Activated T-helper 2 cell treated with anti-CD3 and anti-CD28 coated beads, Interferon-gamma antibody, Interleukin-2, Interleukin-4, amounts not matched to agents 10 μg/mL and 5 μg/mL and 100 μg/mL, durations not matched to agents 14 hours and 24 hours and 36 hours (primary cell): ENCODE measurements at regions of chr1 and their contacts with region 1.

Region 1: GRCh38 chr1:6205849-6206519 is at the start of gene RNF207:
- DNase-seq: peak; percentile 66
- H3K4me3 Mint-ChIP-seq: peak within 1 kb of the TSS; percentile 79
- H3K27ac Mint-ChIP-seq: peak within 1 kb of the TSS; percentile 46
- H3K4me1 Mint-ChIP-seq: peaks cover 11% of the 10 kb centered on the region
- H3K27me3 Mint-ChIP-seq: no peaks in the 10 kb centered on the region
- total RNA-seq, gene RNF207: 54.4 and 58.4 TPM in 2 replicates

Region 2: GRCh38 chr1:6026095-6026809 is 179.7 kb before region 1 on chr1:
- intact Hi-C with region 1: loop called (anchors 5 kb)
- DNase-seq: peak; percentile 91
- H3K4me3 Mint-ChIP-seq: peak overlapping the region; percentile 98
- H3K27ac Mint-ChIP-seq: peak overlapping the region; percentile 97
- H3K4me1 Mint-ChIP-seq: peaks cover 44% of the 10 kb centered on the region
- H3K27me3 Mint-ChIP-seq: no peaks in the 10 kb centered on the region

Region 3: DNA sequence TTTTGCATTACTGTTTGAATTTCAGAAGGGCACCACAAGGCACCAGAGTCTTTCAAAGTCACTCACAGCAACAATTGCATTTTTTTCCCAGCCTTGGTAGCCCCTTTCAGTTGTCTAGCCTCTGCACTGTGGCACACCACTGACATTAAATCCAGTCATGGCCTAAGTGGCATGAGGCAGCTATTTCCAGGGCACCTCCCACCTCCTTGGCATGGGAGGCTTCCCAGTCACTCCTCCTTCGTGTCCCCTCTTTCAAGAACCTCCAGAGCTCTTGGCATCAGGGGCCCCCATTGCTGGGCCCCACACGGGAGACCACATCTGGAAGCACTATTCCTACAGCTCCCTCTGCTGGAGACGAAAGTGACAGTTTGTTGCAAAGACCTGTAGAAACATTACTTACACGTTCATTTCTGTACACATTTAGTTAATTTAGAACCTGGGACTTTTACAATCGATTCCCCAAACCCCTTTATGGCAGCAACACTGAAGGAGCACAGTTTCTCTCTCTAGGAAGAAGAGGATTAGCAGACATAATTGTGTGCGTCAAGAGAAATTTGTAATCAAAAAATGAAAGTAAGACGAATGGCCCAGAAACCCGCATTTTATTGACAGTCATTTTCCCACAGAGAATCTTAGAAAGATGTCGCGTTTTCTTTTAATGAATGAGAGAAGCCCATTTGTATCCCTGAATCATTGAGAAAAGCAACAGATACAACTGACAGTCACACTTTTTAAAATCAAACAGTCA is 20.2 kb before region 1 on chr1:
- intact Hi-C with region 1: no loop called
- DNase-seq: no peak
- H3K4me3 Mint-ChIP-seq: no peak overlapping the region
- H3K27ac Mint-ChIP-seq: no peak overlapping the region
- H3K4me1 Mint-ChIP-seq: peaks cover 17% of the 10 kb centered on the region
- H3K27me3 Mint-ChIP-seq: peaks cover 14% of the 10 kb centered on the region

Region 4: GRCh38 chr1:6235296-6235677 is 29.3 kb after region 1 on chr1:
- intact Hi-C with region 1: loop called (anchors 2 kb)
- DNase-seq: no peak
- H3K4me3 Mint-ChIP-seq: peak overlapping the region; percentile 89
- H3K27ac Mint-ChIP-seq: peak overlapping the region; percentile 60
- H3K4me1 Mint-ChIP-seq: peaks cover 9% of the 10 kb centered on the region
- H3K27me3 Mint-ChIP-seq: peaks cover 15% of the 10 kb centered on the region